ENCODE measurements at regions of chr17 and their contacts with region 1.

Region 1: GRCh38 chr17:77494664-77495435 is 354.1 kb downstream of the SEC14L1 start:
- DNase-seq: peak; percentile 84
- CTCF ChIP-seq: peak; percentile 94

Region 2: DNA sequence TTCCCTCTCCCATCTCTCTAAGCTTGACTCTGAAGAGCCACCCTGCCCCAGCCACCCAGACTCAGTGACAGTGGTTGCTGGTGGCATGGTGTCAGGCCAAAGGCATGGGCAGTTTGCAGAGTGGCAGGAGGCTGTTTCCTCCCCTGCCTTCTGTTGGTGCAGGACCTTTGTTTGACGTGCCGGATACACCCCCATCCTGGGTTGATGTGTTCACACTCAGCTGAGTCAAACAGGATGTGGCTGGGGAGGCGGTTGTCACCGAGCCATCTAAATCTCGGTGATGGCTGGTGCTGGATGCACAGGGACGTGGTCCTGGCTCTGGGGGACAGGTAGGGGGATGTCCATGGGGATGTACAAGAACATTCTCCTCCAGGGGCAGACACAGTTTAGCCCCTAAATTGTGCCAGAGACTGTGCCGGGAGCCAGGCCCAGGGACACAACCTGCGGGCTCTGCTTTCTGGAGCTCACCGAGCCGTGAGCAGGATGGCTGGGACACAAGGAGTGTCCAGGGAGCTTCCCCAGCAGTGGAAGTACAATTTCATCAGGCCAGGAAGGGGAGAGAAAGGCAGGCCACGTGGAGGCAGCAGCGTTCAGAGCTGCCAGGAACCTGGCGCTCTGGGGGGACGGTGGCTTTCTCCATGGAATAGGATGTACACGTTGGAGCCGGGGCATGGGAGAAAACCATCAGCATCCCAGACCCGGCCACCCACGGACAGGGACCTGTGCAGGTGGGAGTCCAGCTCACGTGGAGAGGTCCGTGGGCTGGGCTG is 89.9 kb before region 1 on chr17:
- CTCF ChIA-PET with region 1: interaction called, 41 read pairs
- POLR2A ChIA-PET with region 1: no interaction called
- DNase-seq: peak; percentile 92
- CTCF ChIP-seq: no peak

Region 3: DNA sequence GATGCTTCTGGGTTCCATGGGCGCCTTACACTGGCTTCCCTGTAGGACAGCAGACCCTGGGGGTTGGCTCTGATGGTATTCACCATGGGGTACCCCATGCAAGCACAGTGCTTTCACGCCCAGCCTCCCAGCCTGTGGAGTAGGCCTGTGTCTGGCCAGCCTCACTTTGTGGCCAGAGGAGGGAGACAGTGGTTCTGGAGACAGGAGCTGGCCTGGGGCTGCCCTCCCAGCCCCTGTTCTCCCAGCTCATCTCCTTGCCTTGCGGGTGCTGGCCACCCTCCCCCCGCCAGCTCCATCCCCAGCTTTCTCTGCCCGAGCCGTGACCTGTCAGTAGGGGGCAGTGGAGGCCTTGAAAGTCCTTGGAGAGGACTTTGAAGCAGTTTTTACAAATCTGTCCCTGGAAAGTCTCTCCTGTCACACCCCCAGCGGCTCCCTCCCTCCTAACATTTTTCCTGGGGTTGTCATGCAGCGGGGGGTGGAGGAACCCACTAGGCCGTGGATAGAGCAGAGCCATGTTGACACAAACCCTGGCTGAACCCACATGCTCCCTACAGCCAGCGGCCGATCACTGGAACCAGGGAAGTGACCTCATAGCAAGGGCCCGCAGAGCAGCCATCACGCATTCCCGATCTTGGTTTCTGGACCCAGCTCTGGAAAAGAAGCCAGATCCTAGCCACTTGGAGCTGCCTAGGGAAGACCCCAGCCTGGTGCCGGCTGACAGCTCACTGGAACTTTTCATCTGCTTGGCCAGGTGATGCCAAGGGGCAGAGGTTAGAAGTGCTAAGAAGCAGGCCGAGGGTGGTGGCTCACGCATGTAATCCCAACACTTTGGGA is 64.7 kb before region 1 on chr17:
- CTCF ChIA-PET with region 1: interaction called, 116 read pairs
- POLR2A ChIA-PET with region 1: no interaction called
- DNase-seq: peak; percentile 80
- CTCF ChIP-seq: peak; percentile 91

Region 4: DNA sequence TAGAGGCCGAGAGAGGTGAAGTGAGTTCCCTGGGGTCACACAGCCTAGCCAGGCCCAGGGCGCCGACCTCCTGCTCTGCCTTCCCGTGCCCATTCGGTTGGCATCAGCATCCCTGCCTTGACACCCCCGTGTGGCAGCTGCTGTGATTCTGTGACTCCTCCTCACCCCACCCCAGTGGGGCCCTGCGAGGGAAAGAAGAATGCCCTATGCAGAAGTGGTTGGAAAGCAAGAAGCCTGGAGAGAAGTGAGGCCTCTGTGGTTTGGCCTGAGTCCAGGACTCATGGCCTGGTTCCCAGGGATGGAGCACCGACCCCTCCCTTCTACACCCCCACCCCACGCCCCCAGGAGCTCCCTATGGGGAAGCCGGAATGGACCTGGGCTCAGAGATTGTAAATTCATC is 57.8 kb before region 1 on chr17:
- CTCF ChIA-PET with region 1: interaction called, 26 read pairs
- POLR2A ChIA-PET with region 1: no interaction called
- DNase-seq: no peak
- CTCF ChIP-seq: no peak

Region 5: DNA sequence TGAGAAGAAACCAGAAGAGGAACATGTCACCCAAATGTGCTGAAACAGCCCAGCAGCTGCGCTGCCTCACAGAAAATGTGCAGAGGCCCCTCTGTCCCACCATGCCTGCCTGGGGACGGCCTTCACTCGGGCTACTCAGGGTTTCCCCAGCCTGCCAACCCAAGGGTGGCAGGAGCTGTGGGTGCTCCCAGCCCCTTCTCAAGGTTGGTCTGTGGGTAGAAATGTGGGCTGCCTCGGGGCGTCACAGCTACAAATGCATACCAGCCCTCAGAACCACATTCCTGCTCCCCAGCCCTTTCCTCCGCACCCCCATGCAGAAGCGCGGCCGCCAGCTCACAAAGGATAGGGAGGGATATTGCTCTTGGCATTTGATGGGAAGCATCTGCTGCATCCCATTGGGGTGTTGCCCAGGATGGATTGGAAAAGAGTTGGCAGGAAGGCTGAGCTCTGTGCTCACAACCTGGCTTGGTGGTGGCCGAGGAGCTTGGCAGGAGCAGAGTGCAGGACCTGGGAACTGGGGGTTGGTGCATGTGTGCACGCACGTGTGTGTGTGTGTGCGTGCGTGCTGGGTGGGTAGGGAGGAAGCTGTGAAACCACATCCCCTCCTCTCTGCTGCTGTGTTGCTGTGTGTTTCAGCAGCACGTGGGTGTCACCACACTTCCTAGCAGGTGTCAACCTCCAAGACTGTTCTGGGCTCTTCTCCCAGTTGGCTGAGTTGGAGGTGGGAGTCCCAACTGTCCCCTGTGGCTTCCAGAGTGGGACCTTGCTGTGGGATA is 49.7 kb before region 1 on chr17:
- CTCF ChIA-PET with region 1: interaction called, 12 read pairs
- POLR2A ChIA-PET with region 1: no interaction called
- DNase-seq: peak; percentile 75
- CTCF ChIP-seq: no peak

Region 6: GRCh38 chr17:77471984-77472461 is 22.8 kb before region 1 on chr17:
- CTCF ChIA-PET with region 1: interaction called, 17 read pairs
- POLR2A ChIA-PET with region 1: no interaction called
- DNase-seq: no peak
- CTCF ChIP-seq: no peak

Region 7: GRCh38 chr17:77476931-77477877 is 17.6 kb before region 1 on chr17:
- CTCF ChIA-PET with region 1: interaction called, 17 read pairs
- POLR2A ChIA-PET with region 1: no interaction called
- DNase-seq: no peak
- CTCF ChIP-seq: no peak

Measured in GM10248 (cell line).